Stomach (tissue), 19 donors: ENCODE measurements at regions of chr2 and their contacts with region 1.

Region 1: GRCh38 chr2:152635635-152636298 is 81.5 kb downstream of the PRPF40A start:
- DNase-seq: peak; percentile 70 to 79
- H3K4me3 ChIP-seq: no peak overlapping the region
- H3K27ac ChIP-seq: no peak overlapping the region
- H3K4me1 ChIP-seq: peaks cover 0 to 8% (median 3%) of the 10 kb centered on the region in 4 donors
- H3K27me3 ChIP-seq: no peaks in the 10 kb centered on the region
- CTCF ChIP-seq: peak in 5 of 7 experiments; percentile 53 to 85 (median 67)
- EP300 ChIP-seq: no peak
- POLR2A ChIP-seq: no peak

Region 2: DNA sequence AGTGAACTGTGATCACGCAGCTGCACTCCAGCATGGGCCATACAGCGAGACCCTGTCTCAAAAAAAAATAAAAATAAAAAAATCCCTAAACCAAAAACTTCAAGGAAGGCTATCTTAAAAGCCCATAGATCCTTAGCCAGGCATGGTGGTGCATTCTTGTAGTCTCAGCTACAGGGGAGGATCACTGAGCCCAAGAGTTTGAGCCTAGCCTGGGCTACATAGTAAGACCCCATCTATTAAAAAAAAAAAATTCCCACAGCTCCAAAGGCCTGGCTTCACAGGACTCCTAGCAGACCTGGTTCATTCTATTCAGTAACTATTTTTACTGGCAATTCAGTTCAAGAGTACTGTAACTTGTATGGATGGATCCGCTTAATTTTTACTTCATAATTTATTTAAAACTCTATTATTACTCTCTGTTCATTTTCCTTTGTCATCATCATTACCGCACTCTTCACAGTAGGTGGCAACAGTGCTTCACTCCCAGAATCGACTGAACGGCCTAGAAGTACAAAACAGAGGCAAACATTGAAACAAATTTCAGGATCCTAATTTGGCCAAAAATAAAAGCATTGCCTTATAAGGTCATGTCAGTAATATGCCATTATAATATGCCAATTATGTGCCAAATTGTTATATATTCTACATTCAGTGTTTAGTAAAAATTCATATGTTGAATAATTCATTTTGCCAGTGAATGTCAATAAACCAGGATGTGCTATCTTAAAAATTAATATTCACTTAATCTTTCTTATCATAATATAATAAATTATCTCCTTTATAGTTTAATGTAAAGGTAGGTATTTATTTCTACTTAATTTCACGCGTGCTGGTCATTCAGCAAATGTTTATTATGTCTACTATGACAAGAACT is 445.9 kb before region 1 on chr2:
- intact Hi-C with region 1: loop called (anchors 5 kb)
- DNase-seq: peak in 1 of 2 donors; percentile 82
- H3K4me3 ChIP-seq: no peak overlapping the region
- H3K27ac ChIP-seq: no peak overlapping the region
- H3K4me1 ChIP-seq: no peaks in the 10 kb centered on the region
- H3K27me3 ChIP-seq: no peaks in the 10 kb centered on the region
- CTCF ChIP-seq: peak in 5 of 7 experiments; percentile 47 to 82 (median 69)
- EP300 ChIP-seq: no peak
- POLR2A ChIP-seq: no peak

Region 3: GRCh38 chr2:152497481-152498052 is 138.2 kb before region 1 on chr2:
- intact Hi-C with region 1: no loop called
- DNase-seq: peak; percentile 66 to 69
- H3K4me3 ChIP-seq: no peak overlapping the region
- H3K27ac ChIP-seq: peak overlapping the region in 2 of 5 donors; percentile 33 to 38
- H3K4me1 ChIP-seq: peaks cover 0 to 60% (median 28%) of the 10 kb centered on the region in 4 donors
- H3K27me3 ChIP-seq: no peaks in the 10 kb centered on the region
- CTCF ChIP-seq: no peak
- EP300 ChIP-seq: no peak
- POLR2A ChIP-seq: no peak

Region 4: DNA sequence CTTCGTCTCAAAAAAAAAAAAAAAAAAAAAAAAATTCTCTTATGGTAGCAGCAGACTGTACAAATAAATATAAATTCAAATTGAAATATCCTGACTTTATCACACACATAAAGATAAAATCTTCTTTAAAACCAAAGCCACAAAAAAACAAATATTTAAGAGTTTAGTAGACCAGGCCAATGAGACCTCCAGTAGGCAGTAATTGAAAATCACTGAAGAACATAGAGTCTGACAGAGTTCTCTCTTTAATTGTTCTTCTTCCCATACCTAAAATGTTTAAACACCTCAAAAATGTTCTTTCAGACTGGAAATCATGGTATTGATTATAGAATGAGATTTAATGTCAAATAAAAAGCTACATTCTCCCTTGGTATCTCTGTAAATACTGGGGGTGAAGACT is 60.7 kb after region 1 on chr2:
- intact Hi-C with region 1: no loop called
- DNase-seq: no peak
- H3K4me3 ChIP-seq: no peak overlapping the region
- H3K27ac ChIP-seq: no peak overlapping the region
- H3K4me1 ChIP-seq: peaks cover 0 to 8% (median 4%) of the 10 kb centered on the region in 4 donors
- H3K27me3 ChIP-seq: no peaks in the 10 kb centered on the region
- CTCF ChIP-seq: no peak
- EP300 ChIP-seq: no peak
- POLR2A ChIP-seq: no peak

Region 5: DNA sequence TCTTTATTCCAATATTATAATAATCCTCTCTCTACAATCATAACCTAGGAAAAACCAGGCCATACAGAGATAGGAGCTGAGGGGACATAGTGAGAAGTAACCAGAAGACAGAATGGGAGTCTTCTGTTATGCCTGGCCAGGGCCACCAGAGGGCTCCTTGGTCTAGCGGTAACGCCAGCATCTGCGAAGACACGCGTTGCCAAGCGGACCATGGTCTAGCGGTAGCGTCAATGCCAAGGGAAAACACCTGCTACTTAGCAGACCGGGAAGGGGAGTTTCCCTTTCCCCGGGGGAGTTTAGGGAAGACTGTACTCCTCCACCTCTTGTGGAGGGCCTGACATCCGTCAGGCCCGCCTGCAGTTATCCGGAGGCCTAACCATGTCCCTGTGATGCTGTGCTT is 119.3 kb after region 1 on chr2:
- intact Hi-C with region 1: no loop called
- DNase-seq: peak in 1 of 2 donors; percentile 35
- H3K4me3 ChIP-seq: no peak overlapping the region
- H3K27ac ChIP-seq: no peak overlapping the region
- H3K4me1 ChIP-seq: no peaks in the 10 kb centered on the region
- H3K27me3 ChIP-seq: no peaks in the 10 kb centered on the region
- CTCF ChIP-seq: no peak
- EP300 ChIP-seq: no peak
- POLR2A ChIP-seq: no peak